ENCODE measurements at regions of chr17 and their contacts with region 1.

Region 1: DNA sequence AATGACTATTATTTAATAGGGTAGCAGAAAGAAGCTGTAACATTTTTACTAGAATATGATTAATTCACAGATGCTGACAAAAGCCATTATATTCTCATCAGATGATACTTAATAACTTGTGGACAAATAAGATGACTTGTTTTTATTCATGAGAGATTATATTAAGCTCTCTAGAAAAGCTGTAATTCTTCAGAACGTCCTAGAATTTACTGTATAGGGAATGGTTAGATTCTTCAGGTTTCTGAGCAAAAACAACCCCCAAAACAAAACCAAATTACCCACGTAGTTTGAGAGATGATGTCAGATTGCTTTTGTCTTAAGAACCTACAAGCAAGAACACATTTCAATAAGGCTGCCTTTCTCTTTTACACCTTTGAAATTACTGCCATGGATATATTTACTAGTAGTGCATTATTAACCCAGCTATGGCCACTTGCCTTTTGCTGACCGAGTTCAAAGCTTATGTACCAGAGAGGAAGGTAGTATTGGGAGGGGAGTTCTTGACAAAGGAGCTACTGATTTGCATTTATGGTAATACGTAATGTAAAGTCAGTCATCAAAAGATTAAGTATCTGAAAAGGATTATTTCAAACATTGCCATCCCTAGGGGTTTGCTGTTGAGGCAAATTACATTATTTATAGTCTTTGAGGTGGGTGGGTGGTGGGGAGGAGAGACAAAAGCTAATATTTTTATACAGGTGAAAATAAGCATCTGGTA is 51.7 kb downstream of the NLK start:
- DNase-seq: no peak
- H3K4me3 ChIP-seq: no peak overlapping the region
- H3K27ac ChIP-seq: no peak overlapping the region
- H3K4me1 ChIP-seq: peaks cover 2% of the 10 kb centered on the region
- H3K27me3 ChIP-seq: no peaks in the 10 kb centered on the region
- CTCF ChIP-seq: no peak
- POLR2A ChIP-seq: no peak

Region 2: DNA sequence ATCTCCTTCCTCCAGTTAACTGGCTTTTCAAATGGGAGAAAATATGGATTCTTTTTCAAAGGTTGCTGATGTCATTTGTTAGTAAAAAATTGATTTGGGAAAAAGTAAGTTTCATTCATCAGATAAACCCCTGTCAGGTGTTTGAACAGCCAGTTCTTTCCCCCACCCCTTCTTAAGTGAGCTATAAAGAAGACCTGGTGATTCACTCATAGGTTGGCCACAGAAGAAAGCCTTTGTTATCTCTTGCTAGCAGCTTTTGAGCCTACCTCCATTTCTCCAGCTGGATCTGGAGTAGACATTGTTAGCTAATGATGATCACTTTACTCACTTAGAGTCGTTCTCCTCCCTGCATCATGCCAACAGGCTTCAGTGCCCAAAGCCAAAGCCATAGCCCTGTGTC is 11.3 kb after region 1 on chr17:
- CTCF ChIA-PET with region 1: no interaction called
- POLR2A ChIA-PET with region 1: no interaction called
- dilution Hi-C with region 1: no loop called
- intact Hi-C with region 1: no loop called
- DNase-seq: no peak
- H3K4me3 ChIP-seq: no peak overlapping the region
- H3K27ac ChIP-seq: no peak overlapping the region
- H3K4me1 ChIP-seq: no peaks in the 10 kb centered on the region
- H3K27me3 ChIP-seq: no peaks in the 10 kb centered on the region
- CTCF ChIP-seq: no peak
- POLR2A ChIP-seq: no peak

Region 3: GRCh38 chr17:28125530-28126378 is 31.6 kb after region 1 on chr17:
- CTCF ChIA-PET with region 1: no interaction called
- POLR2A ChIA-PET with region 1: no interaction called
- dilution Hi-C with region 1: no loop called
- intact Hi-C with region 1: loop called (anchors 5 kb)
- DNase-seq: no peak
- H3K4me3 ChIP-seq: no peak overlapping the region
- H3K27ac ChIP-seq: no peak overlapping the region
- H3K4me1 ChIP-seq: peaks cover 5% of the 10 kb centered on the region
- H3K27me3 ChIP-seq: no peaks in the 10 kb centered on the region
- CTCF ChIP-seq: no peak
- POLR2A ChIP-seq: no peak